ENCODE measurements at regions of chr11 and their contacts with region 1.

Region 1: DNA sequence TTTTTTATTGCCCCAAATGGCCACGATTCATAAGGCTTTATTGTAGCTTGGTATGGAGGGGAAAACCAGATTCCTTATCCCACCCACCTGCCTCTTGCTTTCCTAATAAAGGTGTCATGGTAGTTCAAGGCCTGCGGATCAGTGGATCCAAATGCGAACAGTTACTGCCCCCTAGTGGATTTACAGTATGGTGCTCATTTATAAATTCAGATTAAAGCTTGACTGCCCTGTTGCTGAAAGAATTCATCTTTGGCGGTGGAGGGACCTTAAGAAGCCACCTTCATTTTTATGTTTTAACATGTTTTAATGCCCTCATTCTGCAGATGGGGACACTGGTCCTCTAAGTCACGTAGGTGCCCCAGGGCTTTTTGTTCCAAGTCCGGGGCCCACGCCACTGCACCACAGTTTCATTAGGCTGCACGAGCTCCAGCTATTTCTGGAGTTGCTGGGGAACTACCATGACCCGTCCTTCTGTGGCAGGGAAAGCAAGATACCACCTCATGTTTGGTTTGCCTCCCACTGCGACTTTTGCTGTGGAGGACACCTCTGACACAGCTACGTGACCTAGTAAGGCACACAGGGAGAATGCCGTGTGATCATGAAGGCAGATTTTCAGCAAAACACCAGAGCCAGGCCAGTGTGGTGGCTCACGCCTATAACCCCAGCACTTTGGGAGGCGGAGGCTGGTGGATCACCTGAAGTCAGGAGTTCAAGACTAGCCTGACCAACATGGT is 15.6 kb upstream of the INCENP start:
- DNase-seq: peak; percentile 59
- H3K4me3 Mint-ChIP-seq: no peak overlapping the region
- H3K27ac Mint-ChIP-seq: no peak overlapping the region
- H3K4me1 Mint-ChIP-seq: peaks cover 19% of the 10 kb centered on the region
- H3K27me3 Mint-ChIP-seq: no peaks in the 10 kb centered on the region

Region 2: DNA sequence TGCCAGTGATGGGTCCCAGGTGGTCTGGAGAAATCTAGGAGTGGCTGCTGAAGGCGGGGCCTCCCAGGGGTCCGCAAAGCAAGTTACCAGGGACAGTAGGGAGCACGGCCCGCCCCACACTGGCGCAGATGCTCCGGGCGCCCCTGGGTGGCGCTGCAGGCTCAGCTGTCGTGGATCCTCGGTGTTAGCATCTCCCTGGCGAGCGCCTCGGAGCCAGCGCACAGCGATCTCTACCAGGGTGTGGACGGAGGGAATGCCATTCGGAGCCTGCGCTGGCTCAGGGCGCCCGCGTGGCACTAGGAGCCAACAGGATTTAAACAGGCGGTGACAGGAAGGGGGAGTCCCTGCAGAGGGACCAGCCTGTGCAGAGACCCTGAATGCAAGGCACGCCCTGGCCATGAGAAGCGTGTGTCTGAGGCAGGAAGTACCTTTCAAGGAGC is 237.0 kb before region 1 on chr11:
- CTCF ChIA-PET with region 1: interaction called, 13 read pairs
- intact Hi-C with region 1: no loop called
- DNase-seq: peak; percentile 75
- H3K4me3 Mint-ChIP-seq: no peak overlapping the region
- H3K27ac Mint-ChIP-seq: no peak overlapping the region
- H3K4me1 Mint-ChIP-seq: peaks cover 2% of the 10 kb centered on the region
- H3K27me3 Mint-ChIP-seq: no peaks in the 10 kb centered on the region

Region 3: DNA sequence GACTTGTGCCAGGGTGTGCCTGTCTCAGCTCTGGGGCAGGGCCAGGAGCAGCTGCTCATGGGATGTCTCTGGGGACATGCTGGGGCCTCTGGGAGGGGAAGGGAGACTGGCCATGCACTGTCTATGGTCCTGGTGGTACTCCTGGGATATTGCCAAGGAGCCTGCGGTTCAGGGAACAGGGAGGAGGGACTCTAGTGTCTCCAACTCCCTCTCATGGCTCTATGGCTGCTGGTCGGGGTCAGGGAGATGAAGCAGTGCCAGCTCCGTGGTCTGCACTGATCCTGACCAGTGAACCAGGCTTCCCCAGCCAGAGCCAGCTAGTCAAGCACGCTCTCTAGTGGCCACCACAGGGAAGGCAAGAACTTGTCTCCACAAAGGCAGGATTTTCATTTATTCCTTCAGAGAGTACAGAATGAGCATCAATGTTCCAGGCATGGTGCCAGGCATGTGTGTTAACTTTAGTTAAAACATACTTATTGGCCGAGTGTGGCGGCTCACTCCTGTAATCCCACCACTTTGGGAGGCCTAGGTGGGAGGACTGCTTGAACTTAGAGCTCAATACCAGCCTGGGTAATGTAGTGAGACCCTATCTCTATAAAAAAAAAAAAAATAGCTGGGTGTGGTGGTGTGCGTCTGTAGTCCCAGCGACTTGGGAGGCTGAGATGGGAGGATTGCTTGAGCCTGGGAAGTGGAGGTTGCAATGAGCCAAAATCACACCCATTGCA is 160.5 kb before region 1 on chr11:
- CTCF ChIA-PET with region 1: interaction called, 48 read pairs
- intact Hi-C with region 1: loop called (anchors 2 kb)
- DNase-seq: peak; percentile 86
- H3K4me3 Mint-ChIP-seq: no peak overlapping the region
- H3K27ac Mint-ChIP-seq: no peak overlapping the region
- H3K4me1 Mint-ChIP-seq: peaks cover 7% of the 10 kb centered on the region
- H3K27me3 Mint-ChIP-seq: no peaks in the 10 kb centered on the region

Region 4: GRCh38 chr11:62025487-62026105 is 82.6 kb before region 1 on chr11:
- CTCF ChIA-PET with region 1: no interaction called
- intact Hi-C with region 1: loop called (anchors 5 kb)
- DNase-seq: peak; percentile 86
- H3K4me3 Mint-ChIP-seq: peak overlapping the region; percentile 55
- H3K27ac Mint-ChIP-seq: peak overlapping the region; percentile 89
- H3K4me1 Mint-ChIP-seq: peaks cover 17% of the 10 kb centered on the region
- H3K27me3 Mint-ChIP-seq: no peaks in the 10 kb centered on the region

Region 5: DNA sequence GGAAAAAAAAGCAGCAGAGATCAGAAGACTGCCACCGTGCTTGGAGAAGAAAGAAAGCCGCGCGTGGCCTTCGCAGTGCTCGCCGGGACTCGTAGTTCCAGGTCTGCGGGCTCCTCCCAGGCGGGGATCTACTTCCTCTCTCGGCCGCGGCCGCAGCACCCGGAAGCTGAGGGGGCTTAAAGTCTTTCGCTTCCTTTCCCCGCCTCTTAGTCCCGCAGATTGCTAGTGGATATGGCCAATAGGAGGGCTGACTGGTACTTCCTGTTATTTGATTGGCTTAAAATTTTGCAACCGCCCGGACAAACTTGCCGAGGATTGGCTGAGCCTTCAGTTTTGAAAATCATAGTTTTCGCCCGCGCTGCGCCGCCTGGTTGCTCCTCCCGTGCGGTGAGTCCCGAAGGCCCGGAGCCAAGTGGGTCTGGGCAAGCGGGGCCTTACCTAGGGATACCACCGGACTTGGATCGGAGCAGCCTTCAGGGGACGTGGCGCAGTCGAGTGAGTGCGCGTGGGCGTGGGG is 15.5 kb after region 1 on chr11 and contains the start of gene INCENP:
- CTCF ChIA-PET with region 1: interaction called, 6 read pairs
- intact Hi-C with region 1: loop called (anchors 1 kb)
- DNase-seq: peak; percentile 98
- H3K4me3 Mint-ChIP-seq: peak within 1 kb of the TSS; percentile 82
- H3K27ac Mint-ChIP-seq: peak within 1 kb of the TSS; percentile 83
- H3K4me1 Mint-ChIP-seq: peaks cover 29% of the 10 kb centered on the region
- H3K27me3 Mint-ChIP-seq: no peaks in the 10 kb centered on the region
- total RNA-seq, gene INCENP: 156 to 161 TPM